Activated CD4-positive, alpha-beta T cell treated with anti-CD3 and anti-CD28 coated beads for 36 hours (primary cell): ENCODE measurements at regions of chr14 and their contacts with region 1.

Region 1: DNA sequence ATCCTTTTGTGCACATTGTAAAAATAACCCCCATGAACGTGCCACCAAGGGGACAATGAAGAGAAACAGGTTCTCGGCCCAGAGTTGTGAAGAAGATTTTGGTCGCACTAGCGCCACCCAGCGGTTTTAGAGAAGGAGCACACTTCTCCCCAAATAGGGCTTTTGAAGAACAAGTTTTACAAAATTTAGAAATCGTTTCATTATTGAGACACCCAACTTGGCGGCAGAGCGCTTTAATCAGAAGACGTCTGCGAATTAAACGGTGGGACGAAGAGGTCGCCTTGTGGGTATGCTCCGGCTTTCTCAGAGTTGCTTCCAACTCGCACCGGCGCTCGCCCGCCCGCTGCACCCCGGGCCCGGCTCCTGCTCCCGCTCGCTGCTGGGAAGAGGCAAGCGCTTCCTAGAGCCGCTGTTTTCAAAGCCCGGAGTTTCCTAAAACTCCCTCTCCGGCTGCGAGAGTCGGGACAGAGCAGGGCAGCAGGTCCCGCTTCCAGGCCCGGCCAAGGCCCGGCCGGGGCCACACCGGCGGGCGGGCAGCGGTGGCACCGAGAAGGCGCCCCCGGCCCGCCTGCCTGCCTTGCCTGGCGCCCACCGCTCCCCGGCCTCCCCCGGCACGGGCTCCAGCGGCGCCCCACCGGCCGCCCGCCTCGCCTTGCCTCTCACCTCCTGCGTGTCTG is 673 bp downstream of the FOXA1 start:
- DNase-seq: peak; percentile 75
- ATAC-seq: no peak
- H3K4me3 Mint-ChIP-seq: peak overlapping the region; percentile 53
- H3K27ac Mint-ChIP-seq: peak overlapping the region; percentile 29
- H3K4me1 Mint-ChIP-seq: peaks cover 28% of the 10 kb centered on the region
- H3K27me3 Mint-ChIP-seq: peaks cover 66% of the 10 kb centered on the region

Region 2: DNA sequence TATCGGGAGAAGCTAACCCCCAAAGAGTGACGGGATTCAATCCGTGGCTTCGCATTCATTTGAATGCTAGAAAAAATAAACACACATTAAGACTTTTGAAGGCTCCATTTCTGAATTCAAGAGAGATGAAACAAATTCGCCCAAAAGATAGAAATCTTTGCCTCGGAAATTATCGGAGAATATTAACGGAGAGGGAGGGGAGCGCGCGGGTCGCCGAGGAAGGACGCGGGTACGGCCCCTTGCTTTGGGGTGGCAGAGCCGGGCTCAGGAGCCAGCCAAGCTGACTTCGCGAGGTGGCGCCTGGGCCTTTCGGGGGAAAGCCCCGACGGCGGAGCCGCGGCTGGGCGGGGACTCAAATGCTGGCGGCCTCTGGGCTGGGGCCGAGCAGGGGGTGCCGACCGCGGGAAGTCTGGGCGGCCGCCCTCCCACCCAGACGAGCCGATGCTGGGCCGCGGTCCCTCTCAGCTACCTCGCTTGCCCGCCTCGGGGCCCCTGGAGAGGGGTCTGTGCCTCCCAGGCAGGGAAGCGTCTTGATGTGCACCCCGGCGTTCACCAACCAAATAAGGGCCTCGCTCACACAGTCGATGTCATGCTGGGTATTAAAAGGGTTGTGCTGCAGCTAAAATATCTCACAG is 1089.1 kb before region 1 on chr14:
- CTCF ChIA-PET with region 1: no interaction called
- POLR2A ChIA-PET with region 1: no interaction called
- intact Hi-C with region 1: loop called in 1 of 2 experiments (anchors 5 kb)
- DNase-seq: peak; percentile 55
- ATAC-seq: peak; percentile 57
- H3K4me3 Mint-ChIP-seq: peak overlapping the region; percentile 34
- H3K27ac Mint-ChIP-seq: no peak overlapping the region
- H3K4me1 Mint-ChIP-seq: peaks cover 15% of the 10 kb centered on the region
- H3K27me3 Mint-ChIP-seq: peaks cover 73% of the 10 kb centered on the region

Region 3: GRCh38 chr14:36655963-36656686 is 938.3 kb before region 1 on chr14:
- CTCF ChIA-PET with region 1: no interaction called
- POLR2A ChIA-PET with region 1: interaction called, 6 read pairs
- intact Hi-C with region 1: loop called (anchors 2 to 5 kb)
- DNase-seq: peak; percentile 69
- ATAC-seq: peak; percentile 58
- H3K4me3 Mint-ChIP-seq: no peak overlapping the region
- H3K27ac Mint-ChIP-seq: no peak overlapping the region
- H3K4me1 Mint-ChIP-seq: peaks cover 26% of the 10 kb centered on the region
- H3K27me3 Mint-ChIP-seq: peaks cover 80% of the 10 kb centered on the region

Region 4: DNA sequence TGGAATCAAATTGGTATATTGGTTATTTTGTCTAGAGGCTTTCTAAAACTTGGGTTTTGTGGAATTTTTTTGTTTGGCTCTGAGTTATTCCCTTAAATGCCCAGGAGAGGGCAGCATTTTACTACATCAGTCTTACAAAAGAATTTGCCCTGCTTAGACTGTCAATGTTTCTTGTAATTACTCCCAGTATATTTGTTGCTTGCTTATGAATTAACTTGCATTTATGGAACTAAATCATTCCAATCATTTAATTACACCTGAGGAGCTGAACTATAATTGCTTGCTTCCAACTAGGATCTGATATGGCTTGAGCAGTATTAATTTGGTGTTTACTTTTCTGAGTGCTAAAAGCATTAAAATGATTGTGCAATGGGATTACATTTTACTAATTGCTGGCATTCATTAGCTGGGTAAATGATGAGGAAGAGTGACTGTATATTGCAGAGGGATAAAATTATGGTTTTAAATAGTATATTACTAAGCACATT is 347.9 kb before region 1 on chr14:
- CTCF ChIA-PET with region 1: no interaction called
- POLR2A ChIA-PET with region 1: no interaction called
- intact Hi-C with region 1: loop called in 1 of 2 experiments (anchors 2 kb)
- DNase-seq: no peak
- ATAC-seq: no peak
- H3K4me3 Mint-ChIP-seq: no peak overlapping the region
- H3K27ac Mint-ChIP-seq: no peak overlapping the region
- H3K4me1 Mint-ChIP-seq: no peaks in the 10 kb centered on the region
- H3K27me3 Mint-ChIP-seq: no peaks in the 10 kb centered on the region

Region 5: DNA sequence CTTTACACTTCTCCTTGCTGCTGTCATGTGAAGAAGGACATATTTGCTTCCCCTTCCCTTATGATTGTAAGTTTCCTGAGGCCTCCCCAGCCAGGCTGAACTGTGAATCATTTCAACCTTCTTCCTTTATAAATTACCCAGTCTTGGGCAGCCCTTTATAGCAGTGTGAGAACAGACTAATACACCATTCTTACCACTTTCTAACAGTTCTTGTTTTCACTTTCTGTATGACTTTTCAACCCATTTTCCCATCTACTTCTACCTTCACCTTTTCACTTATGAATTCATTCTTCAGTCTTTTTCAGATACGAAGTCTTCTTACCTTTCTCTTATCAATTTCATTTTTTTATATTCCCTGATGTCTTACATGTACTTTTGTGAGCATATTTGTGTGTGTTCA is 54.4 kb before region 1 on chr14:
- CTCF ChIA-PET with region 1: no interaction called
- POLR2A ChIA-PET with region 1: no interaction called
- intact Hi-C with region 1: no loop called
- DNase-seq: no peak
- ATAC-seq: no peak
- H3K4me3 Mint-ChIP-seq: no peak overlapping the region
- H3K27ac Mint-ChIP-seq: no peak overlapping the region
- H3K4me1 Mint-ChIP-seq: no peaks in the 10 kb centered on the region
- H3K27me3 Mint-ChIP-seq: no peaks in the 10 kb centered on the region

Region 6: GRCh38 chr14:38210587-38211216 is 616.3 kb after region 1 on chr14:
- CTCF ChIA-PET with region 1: no interaction called
- POLR2A ChIA-PET with region 1: no interaction called
- intact Hi-C with region 1: loop called in 1 of 2 experiments (anchors 5 kb)
- DNase-seq: no peak
- ATAC-seq: no peak
- H3K4me3 Mint-ChIP-seq: no peak overlapping the region
- H3K27ac Mint-ChIP-seq: no peak overlapping the region
- H3K4me1 Mint-ChIP-seq: peaks cover 21% of the 10 kb centered on the region
- H3K27me3 Mint-ChIP-seq: peaks cover 49% of the 10 kb centered on the region

Region 7: DNA sequence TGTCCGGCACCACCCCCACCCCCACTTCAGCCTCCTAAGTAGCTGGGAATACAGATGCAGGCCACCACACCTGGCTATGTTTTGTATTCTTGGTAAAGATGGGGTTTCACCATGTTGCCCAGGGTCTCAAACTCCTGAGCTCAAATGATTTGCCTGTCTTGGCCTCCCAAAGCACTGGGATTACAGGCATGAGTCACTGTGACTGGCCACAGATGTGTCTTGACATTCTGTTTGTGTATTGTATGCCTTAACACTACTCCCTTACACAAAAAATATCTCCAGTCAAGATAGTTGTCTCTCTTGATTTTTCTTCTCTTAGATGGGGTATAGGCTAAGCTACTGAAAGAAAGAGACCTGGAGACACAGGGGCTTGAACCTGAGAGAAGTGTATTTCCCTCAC is 644.0 kb after region 1 on chr14:
- CTCF ChIA-PET with region 1: no interaction called
- POLR2A ChIA-PET with region 1: no interaction called
- intact Hi-C with region 1: no loop called
- DNase-seq: no peak
- ATAC-seq: no peak
- H3K4me3 Mint-ChIP-seq: no peak overlapping the region
- H3K27ac Mint-ChIP-seq: no peak overlapping the region
- H3K4me1 Mint-ChIP-seq: no peaks in the 10 kb centered on the region
- H3K27me3 Mint-ChIP-seq: peaks cover 12% of the 10 kb centered on the region